ENCODE measurements at regions of chr5 and their contacts with region 1.

Region 1: GRCh38 chr5:148831590-148832565 is 5.5 kb downstream of the ADRB2 start:
- DNase-seq: peak; percentile 86
- H3K4me3 ChIP-seq: peak overlapping the region; percentile 76
- H3K27ac ChIP-seq: peak overlapping the region; percentile 95
- H3K4me1 ChIP-seq: peaks cover 72% of the 10 kb centered on the region
- CTCF ChIP-seq: no peak

Region 2: DNA sequence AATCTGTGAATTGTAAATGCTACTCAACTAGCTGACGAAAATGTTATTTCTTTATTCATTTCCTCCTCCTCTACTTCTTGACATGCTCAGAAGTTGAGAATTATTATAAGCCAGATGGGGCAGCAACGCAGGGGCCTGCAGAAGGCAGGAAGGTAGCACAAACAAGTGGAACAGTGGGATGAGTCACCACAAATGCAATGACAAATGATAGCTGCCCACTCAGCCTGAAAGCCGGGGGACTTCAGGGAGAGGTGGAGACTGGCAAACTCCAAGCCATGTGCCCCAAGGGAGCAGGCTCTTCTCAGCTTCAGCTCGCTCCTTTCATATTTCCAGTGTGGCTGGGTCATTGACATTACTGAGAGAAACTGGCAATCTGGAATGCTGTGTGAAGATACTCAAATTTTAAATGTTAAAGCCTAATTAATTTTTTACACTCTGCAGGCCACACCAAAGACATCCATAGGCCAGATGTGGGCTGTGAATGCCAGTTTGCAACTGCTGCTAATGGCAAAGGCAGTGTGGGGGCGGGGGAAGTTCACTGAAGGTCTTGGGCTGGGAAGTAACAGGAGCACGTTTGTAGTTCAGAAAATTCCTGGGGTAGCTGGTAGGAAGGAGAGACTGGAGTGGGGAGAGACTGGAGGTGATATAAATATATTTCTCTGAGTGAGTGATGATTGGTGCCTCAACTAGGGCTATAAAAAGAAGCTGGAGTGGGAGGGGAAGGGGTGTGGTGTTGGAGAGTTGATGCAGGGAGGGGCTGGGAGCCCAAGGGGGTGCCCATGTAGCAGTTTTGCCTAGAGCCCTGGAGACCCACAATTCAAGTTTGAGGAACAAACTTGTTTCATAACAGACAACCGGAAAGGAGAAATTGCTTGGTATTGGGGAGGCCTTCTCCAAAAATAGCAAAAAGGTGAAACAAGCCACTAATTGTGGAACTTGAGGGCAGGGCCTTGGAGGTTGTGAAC is 26.3 kb before region 1 on chr5:
- CTCF ChIA-PET with region 1: interaction called, 3 read pairs
- POLR2A ChIA-PET with region 1: interaction called, 34 read pairs
- intact Hi-C with region 1: loop called (anchors 1 kb)
- DNase-seq: peak; percentile 40
- H3K4me3 ChIP-seq: peak overlapping the region; percentile 12
- H3K27ac ChIP-seq: peak overlapping the region; percentile 93
- H3K4me1 ChIP-seq: peaks cover 52% of the 10 kb centered on the region
- CTCF ChIP-seq: no peak

Region 3: DNA sequence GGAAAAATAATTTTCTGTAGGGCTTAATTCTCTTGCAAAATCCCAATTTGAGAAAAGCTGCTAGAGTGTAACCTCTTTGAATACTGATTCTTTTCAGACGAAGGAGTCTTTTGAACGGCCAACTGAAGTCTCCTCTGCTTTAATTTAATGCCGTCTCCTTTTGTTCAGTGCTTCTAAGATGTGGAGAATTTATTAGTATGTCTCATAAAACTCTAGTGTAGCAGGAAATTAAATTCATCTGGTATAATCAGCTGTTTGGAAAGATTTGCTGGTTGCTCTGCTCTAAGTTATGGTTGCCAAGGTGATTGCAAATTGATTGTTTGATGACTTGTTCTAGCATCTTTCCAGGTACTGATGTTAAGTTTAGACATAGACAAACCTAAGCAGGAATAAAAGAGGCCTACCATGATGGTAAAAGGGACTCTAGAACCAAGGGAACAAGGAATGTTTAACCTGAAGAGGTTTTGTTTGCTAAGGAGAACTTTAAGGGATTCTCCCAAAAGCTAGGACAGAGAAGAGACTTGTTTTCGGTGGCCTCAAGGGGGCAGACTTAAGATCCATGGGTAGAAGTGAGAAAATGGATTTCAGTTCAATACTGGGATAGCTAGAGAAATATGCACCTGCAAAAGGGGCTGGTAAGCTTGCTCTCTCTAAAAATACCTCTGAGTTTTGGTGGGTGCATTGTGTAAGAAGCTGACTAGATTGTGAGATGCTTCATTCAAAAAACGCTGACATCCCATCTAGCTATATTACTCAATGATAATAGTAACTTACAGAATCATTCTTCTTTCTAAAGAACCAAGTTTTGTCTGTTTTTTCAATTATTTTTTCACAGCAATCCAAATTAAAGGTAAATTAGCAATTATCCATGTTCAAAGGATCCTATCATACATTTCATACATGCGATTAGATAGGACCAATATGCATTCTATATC is 11.2 kb before region 1 on chr5:
- CTCF ChIA-PET with region 1: interaction called, 11 read pairs
- POLR2A ChIA-PET with region 1: interaction called, 21 read pairs
- intact Hi-C with region 1: no loop called
- DNase-seq: peak; percentile 44
- H3K4me3 ChIP-seq: no peak overlapping the region
- H3K27ac ChIP-seq: no peak overlapping the region
- H3K4me1 ChIP-seq: peaks cover 66% of the 10 kb centered on the region
- CTCF ChIP-seq: peak; percentile 88

Region 4: GRCh38 chr5:149345147-149345875 is 513.4 kb after region 1 on chr5 and contains the start of gene GRPEL2:
- CTCF ChIA-PET with region 1: no interaction called
- POLR2A ChIA-PET with region 1: no interaction called
- intact Hi-C with region 1: loop called (anchors 10 kb)
- DNase-seq: peak; percentile 98
- H3K4me3 ChIP-seq: peak within 1 kb of the TSS; percentile 88
- H3K27ac ChIP-seq: peak within 1 kb of the TSS; percentile 78
- H3K4me1 ChIP-seq: peaks cover 29% of the 10 kb centered on the region
- CTCF ChIP-seq: no peak
- total RNA-seq, gene GRPEL2: 17.4 and 28.3 TPM in 2 replicates

Region 5: DNA sequence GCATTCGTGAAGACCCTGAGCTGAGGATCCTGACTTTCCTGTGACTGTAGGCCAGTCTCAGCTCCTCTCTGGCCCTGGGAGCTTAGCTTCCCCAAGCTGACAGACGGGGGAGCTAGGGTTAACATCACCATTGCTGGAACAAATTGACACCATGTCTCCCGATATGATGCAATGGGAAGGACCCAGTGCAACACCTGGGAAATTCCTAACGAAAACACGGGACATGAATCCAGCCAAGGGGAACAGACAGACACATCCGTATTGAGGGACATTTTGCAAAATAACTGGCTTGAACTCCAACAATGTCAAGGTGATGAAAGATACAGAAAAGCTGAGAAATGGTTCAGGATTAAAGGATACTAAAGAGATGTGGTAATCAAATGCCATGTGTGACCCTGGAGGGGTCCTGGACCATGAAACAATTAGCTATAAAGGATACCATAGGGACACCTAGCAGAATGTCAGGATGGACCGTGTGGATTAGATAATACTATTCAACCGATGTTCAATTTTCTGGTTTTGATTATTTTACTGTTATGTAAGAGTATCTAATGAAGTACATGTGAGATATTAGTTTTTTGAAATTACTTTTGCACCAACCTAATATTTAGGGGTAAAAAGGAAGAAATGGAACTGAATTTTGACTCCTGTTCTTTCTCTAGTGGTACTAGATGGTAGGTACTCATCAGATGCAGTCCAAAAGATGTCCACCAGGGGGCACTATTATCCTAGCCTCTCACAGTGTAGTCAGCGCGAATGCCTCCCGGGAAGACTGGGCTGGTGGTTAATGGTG is 1728.7 kb after region 1 on chr5:
- CTCF ChIA-PET with region 1: no interaction called
- POLR2A ChIA-PET with region 1: no interaction called
- intact Hi-C with region 1: loop called (anchors 10 kb)
- DNase-seq: peak; percentile 87
- H3K4me3 ChIP-seq: no peak overlapping the region
- H3K27ac ChIP-seq: no peak overlapping the region
- H3K4me1 ChIP-seq: peaks cover 26% of the 10 kb centered on the region
- CTCF ChIP-seq: peak; percentile 95

Measured in OCI-LY7 (cell line).